ENCODE measurements at regions of chr2 and their contacts with region 1.

Region 1: DNA sequence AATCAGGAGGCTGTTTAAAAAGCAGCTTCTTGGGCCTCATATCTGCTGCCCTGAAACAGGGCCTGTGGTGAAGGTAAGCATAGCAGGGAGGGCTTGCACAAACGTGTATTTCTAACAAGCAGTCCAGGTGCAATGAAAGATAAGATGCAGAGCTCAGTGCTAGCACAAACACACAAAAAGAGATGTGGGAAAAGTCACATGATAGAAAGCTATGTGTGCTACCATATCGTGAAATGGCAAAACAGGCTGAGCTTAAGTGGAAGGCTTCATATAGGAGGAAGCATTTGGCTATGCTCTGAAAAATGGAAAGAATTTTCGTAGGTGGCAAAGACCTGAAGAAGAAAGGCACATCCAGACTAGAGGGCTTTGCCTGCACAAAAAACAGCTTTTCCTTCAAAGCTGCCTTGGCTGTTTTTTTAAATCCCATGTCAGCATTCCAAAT is 10.2 kb downstream of the RSAD2 start:
- DNase-seq: no peak
- H3K4me3 ChIP-seq: no peak overlapping the region
- H3K27ac ChIP-seq: no peak overlapping the region
- H3K4me1 ChIP-seq: no peaks in the 10 kb centered on the region
- H3K27me3 ChIP-seq: no peaks in the 10 kb centered on the region
- CTCF ChIP-seq: no peak

Region 2: DNA sequence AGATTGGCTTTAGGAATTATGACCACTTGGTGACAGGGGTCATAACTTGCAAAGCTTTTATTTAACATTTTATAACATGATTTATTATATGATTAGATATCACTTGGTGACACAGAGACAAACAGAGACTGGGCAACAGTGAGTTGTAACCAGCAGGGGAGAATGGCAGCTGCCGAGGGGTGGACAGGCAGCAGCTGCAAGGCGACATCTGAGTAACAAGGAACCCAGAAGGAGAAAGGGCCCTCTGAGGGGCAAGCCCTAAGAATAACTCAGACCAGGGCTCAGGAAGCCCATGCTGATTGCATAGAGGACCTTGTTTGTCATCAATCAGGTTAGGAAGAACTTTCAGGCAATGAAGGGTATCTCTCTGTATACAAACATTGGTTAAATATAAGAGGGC is 1535.5 kb before region 1 on chr2:
- intact Hi-C with region 1: loop called (anchors 5 kb)
- DNase-seq: no peak
- H3K4me3 ChIP-seq: no peak overlapping the region
- H3K27ac ChIP-seq: no peak overlapping the region
- H3K4me1 ChIP-seq: no peaks in the 10 kb centered on the region
- H3K27me3 ChIP-seq: no peaks in the 10 kb centered on the region
- CTCF ChIP-seq: no peak